Activated naive CD4-positive, alpha-beta T cell treated with anti-CD3 and anti-CD28 coated beads, Interleukin-2, amount 10 ng/mL, durations not matched to agents 7 days and 5 days (primary cell): ENCODE measurements at regions of chr14 and their contacts with region 1.

Region 1: DNA sequence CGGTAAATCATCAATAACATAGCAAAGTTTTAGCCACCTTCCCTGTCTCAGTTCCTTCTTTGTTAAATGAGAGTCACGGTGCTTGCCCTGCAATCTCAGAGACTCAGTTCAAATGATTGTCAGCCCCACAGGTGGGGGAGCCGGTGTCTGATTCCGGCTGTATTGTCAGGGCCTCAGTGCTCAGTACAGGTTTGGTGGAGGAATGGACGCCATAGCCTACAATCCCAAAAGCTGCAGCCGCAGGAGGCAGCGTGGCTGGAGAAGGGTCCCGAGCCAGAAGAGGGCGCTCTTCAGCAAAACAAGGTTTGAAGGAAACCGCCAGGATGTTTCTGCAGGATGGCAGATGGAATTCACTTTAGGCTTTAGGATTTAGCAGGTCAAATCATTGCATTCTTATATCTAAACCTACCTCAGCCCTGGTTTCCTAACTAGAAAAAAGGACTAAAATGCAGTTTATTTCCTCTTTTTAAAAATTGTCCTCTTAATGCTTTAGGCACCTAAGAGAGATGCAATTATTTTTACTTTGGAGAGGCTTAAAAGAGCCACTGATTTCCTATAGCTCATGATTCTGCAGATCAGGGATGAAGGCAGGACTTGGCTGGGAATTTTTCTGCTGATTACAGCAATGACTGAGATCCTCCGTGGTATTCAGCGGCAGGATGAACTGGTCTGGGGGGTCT is 29.2 kb downstream of the FOS start:
- DNase-seq: peak; percentile 82
- H3K4me3 Mint-ChIP-seq: no peak overlapping the region
- H3K27ac Mint-ChIP-seq: no peak overlapping the region
- H3K4me1 Mint-ChIP-seq: peaks cover 13% of the 10 kb centered on the region
- H3K27me3 Mint-ChIP-seq: peaks cover 8% of the 10 kb centered on the region

Region 2: GRCh38 chr14:74945823-74946682 is 361.8 kb before region 1 on chr14:
- CTCF ChIA-PET with region 1: interaction called, 16 read pairs
- DNase-seq: peak; percentile 85
- H3K4me3 Mint-ChIP-seq: no peak overlapping the region
- H3K27ac Mint-ChIP-seq: peak overlapping the region; percentile 42
- H3K4me1 Mint-ChIP-seq: peaks cover 32% of the 10 kb centered on the region
- H3K27me3 Mint-ChIP-seq: peaks cover 33% of the 10 kb centered on the region

Region 3: GRCh38 chr14:75126679-75127473 is 181.0 kb before region 1 on chr14 and contains the start of gene NEK9:
- CTCF ChIA-PET with region 1: interaction called, 72 read pairs
- DNase-seq: peak; percentile 94
- H3K4me3 Mint-ChIP-seq: peak within 1 kb of the TSS; percentile 97
- H3K27ac Mint-ChIP-seq: peak within 1 kb of the TSS; percentile 96
- H3K4me1 Mint-ChIP-seq: peaks cover 41% of the 10 kb centered on the region
- H3K27me3 Mint-ChIP-seq: no peaks in the 10 kb centered on the region

Region 4: DNA sequence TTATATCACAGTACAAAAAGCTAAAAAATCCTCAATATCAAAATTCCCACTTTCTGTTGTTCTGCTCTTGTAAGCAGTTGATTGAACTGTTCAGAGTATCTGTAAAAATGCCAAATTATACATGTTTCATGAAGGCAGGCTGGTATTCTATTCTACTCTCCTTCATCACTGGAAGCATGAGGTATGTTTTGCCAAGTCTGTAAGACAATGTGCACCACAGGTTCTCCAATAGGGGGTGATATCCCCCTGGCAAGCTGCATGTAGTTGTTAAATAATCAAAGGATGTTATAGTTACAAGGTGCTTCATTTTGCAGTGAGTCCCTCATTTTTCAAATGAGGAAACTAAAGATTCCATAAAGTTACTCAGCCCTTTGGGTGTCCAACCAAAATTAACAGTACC is 165.9 kb before region 1 on chr14:
- CTCF ChIA-PET with region 1: interaction called, 13 read pairs
- DNase-seq: peak; percentile 36
- H3K4me3 Mint-ChIP-seq: no peak overlapping the region
- H3K27ac Mint-ChIP-seq: no peak overlapping the region
- H3K4me1 Mint-ChIP-seq: peaks cover 64% of the 10 kb centered on the region
- H3K27me3 Mint-ChIP-seq: no peaks in the 10 kb centered on the region

Region 5: DNA sequence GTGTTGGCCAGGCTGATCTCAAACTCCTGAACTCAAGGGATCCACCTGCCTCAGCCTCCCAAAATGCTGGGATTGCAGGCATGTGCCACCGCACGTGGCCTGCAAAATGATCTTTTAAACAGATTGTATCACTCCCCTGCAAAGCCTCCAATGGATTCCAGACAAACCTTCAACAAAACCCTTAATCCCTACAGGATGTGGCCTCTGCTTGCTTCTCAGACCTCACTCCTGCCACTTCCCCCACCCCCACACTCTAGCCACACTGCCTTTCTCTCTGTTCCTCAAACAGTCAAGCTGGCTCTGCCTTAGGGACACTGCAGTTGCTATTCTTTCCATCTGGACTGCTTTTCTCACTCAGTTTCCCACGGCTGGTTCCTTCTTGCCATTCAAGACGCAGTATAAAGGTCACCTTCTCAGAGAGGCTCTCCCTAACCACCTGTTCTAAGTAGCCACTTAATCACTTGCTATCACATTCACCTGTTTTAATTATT is 84.1 kb before region 1 on chr14:
- CTCF ChIA-PET with region 1: no interaction called
- DNase-seq: no peak
- H3K4me3 Mint-ChIP-seq: no peak overlapping the region
- H3K27ac Mint-ChIP-seq: no peak overlapping the region
- H3K4me1 Mint-ChIP-seq: peaks cover 9% of the 10 kb centered on the region
- H3K27me3 Mint-ChIP-seq: peaks cover 50% of the 10 kb centered on the region

Region 6: GRCh38 chr14:75452900-75453747 is 145.3 kb after region 1 on chr14:
- CTCF ChIA-PET with region 1: interaction called, 81 read pairs
- DNase-seq: no peak
- H3K4me3 Mint-ChIP-seq: no peak overlapping the region
- H3K27ac Mint-ChIP-seq: no peak overlapping the region
- H3K4me1 Mint-ChIP-seq: peaks cover 4% of the 10 kb centered on the region
- H3K27me3 Mint-ChIP-seq: no peaks in the 10 kb centered on the region

Region 7: GRCh38 chr14:75487155-75487671 is 179.4 kb after region 1 on chr14:
- CTCF ChIA-PET with region 1: interaction called, 79 read pairs
- DNase-seq: peak; percentile 27
- H3K4me3 Mint-ChIP-seq: no peak overlapping the region
- H3K27ac Mint-ChIP-seq: peak overlapping the region; percentile 43
- H3K4me1 Mint-ChIP-seq: peaks cover 38% of the 10 kb centered on the region
- H3K27me3 Mint-ChIP-seq: peaks cover 4% of the 10 kb centered on the region